PC-9 (cell line): ENCODE measurements at regions of chr6 and their contacts with region 1.

Region 1: DNA sequence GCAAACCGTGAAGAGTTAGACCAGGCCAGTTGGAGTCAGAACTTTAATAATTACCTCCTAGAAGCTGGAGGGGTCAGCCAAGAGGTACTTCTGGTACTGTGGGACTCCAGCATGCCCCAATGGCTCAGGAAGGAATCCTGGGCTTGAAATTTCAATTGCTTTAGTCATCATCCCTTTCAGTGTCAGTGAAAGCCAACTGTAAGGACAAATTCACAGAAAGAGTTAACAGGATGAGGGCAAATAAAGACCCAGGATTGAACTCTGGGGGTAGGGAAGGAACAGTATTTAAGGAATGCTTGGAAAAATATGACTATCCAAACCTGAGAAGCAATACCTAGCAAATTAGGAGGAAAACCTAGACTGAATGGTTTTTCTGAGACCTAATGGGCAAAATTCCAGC is 735.1 kb upstream of the MARCKS start:
- DNase-seq: peak; percentile 62 to 95
- H3K4me3 ChIP-seq: peak overlapping the region; percentile 6; the same call in 1 of the 2 replicates
- H3K27ac ChIP-seq: peak overlapping the region; percentile 93
- H3K4me1 ChIP-seq: peaks cover 57% of the 10 kb centered on the region
- H3K27me3 ChIP-seq: no peaks in the 10 kb centered on the region
- CTCF ChIP-seq: peak; percentile 63

Region 2: GRCh38 chr6:113182370-113183141 is 60.5 kb after region 1 on chr6:
- CTCF ChIA-PET with region 1: interaction called, 5 read pairs
- POLR2A ChIA-PET with region 1: no interaction called
- intact Hi-C with region 1: loop called (anchors 1 kb)
- DNase-seq: peak in 1 of 2 experiments; percentile 79
- H3K4me3 ChIP-seq: no peak overlapping the region
- H3K27ac ChIP-seq: peak overlapping the region; percentile 30
- H3K4me1 ChIP-seq: peaks cover 18% of the 10 kb centered on the region
- H3K27me3 ChIP-seq: no peaks in the 10 kb centered on the region
- CTCF ChIP-seq: no peak

Region 3: DNA sequence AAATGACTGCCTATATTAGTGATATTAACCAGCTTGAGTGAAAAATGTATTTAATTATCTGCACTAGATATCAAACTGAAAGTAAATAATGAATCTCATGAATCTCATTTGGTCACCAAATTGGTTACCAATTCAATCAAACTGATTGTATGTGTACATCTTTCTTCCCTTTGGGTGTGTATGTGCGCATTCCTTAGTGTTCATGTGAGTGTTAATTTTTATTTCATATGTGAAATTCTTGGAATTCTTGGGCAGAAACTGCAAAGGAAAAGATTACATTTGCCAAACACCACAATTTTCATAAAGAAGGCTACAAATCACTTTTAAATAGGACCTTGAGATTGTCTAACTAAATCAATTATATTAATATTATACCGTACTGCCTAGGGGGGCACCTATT is 86.7 kb after region 1 on chr6:
- CTCF ChIA-PET with region 1: no interaction called
- POLR2A ChIA-PET with region 1: no interaction called
- intact Hi-C with region 1: no loop called
- DNase-seq: no peak
- H3K4me3 ChIP-seq: no peak overlapping the region
- H3K27ac ChIP-seq: no peak overlapping the region
- H3K4me1 ChIP-seq: no peaks in the 10 kb centered on the region
- H3K27me3 ChIP-seq: no peaks in the 10 kb centered on the region
- CTCF ChIP-seq: no peak

Region 4: GRCh38 chr6:113361014-113361645 is 239.1 kb after region 1 on chr6:
- CTCF ChIA-PET with region 1: no interaction called
- POLR2A ChIA-PET with region 1: interaction called, 19 read pairs
- intact Hi-C with region 1: loop called (anchors 1 kb)
- DNase-seq: peak in 1 of 2 experiments; percentile 59
- H3K4me3 ChIP-seq: no peak overlapping the region
- H3K27ac ChIP-seq: 0 out of 2 replicates have a peak overlapping the region, but pooled peaks have one; percentile 2
- H3K4me1 ChIP-seq: peaks cover 37% of the 10 kb centered on the region
- H3K27me3 ChIP-seq: no peaks in the 10 kb centered on the region
- CTCF ChIP-seq: no peak

Region 5: GRCh38 chr6:113495506-113495905 is 373.4 kb after region 1 on chr6:
- CTCF ChIA-PET with region 1: no interaction called
- POLR2A ChIA-PET with region 1: no interaction called
- intact Hi-C with region 1: loop called (anchors 1 kb)
- DNase-seq: peak in 1 of 2 experiments; percentile 70
- H3K4me3 ChIP-seq: no peak overlapping the region
- H3K27ac ChIP-seq: peak overlapping the region; percentile 75
- H3K4me1 ChIP-seq: peaks cover 59% of the 10 kb centered on the region
- H3K27me3 ChIP-seq: no peaks in the 10 kb centered on the region
- CTCF ChIP-seq: no peak

Region 6: DNA sequence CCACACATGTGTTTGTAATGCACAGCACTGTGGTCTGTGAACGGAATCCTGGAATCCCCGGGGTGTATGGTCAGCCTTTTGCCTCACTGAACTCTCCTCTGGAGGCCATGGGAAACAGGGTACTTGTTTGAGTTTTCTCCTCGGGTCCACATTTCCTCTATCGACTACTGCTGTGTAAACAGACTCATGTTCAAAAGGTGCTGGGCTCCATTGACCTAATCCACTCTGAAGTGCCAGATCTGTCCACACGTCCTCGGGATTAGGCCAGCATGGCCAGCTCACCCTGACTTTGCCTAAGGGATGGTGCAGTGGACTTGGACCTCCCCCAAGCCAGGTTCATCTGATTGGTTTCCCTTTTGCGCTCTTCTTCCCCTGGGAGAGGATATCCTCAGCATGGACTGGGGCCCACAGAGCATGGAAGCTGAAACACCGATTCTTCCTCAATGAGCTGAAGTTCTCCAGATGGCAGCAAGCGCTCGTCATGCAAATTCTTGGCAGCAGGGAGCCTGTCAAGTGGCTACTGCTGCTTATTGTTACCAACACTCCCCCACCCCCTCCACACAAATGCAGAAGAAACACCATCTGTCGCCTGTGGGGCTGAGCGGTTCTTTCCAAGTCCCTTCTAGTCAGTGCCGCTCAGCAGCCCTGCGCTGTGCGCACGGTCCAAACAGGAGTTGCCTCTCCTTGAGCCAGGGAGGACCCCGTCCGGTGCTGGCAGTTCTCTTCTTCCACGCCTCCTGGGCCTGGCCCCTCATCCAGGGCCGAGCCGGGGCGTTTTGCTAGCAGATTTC is 442.5 kb after region 1 on chr6:
- CTCF ChIA-PET with region 1: no interaction called
- POLR2A ChIA-PET with region 1: no interaction called
- intact Hi-C with region 1: no loop called
- DNase-seq: peak in 1 of 2 experiments; percentile 28
- H3K4me3 ChIP-seq: no peak overlapping the region
- H3K27ac ChIP-seq: no peak overlapping the region
- H3K4me1 ChIP-seq: peaks cover 21% of the 10 kb centered on the region
- H3K27me3 ChIP-seq: no peaks in the 10 kb centered on the region
- CTCF ChIP-seq: no peak

Region 7: GRCh38 chr6:113690281-113691259 is 568.5 kb after region 1 on chr6:
- CTCF ChIA-PET with region 1: no interaction called
- POLR2A ChIA-PET with region 1: no interaction called
- intact Hi-C with region 1: loop called (anchors 5 kb)
- DNase-seq: peak; percentile 21 to 86
- H3K4me3 ChIP-seq: no peak overlapping the region
- H3K27ac ChIP-seq: no peak overlapping the region
- H3K4me1 ChIP-seq: peaks cover 39% of the 10 kb centered on the region
- H3K27me3 ChIP-seq: no peaks in the 10 kb centered on the region
- CTCF ChIP-seq: no peak

Region 8: GRCh38 chr6:113825781-113826180 is 703.7 kb after region 1 on chr6:
- CTCF ChIA-PET with region 1: no interaction called
- POLR2A ChIA-PET with region 1: no interaction called
- intact Hi-C with region 1: no loop called
- DNase-seq: no peak
- H3K4me3 ChIP-seq: no peak overlapping the region
- H3K27ac ChIP-seq: no peak overlapping the region
- H3K4me1 ChIP-seq: no peaks in the 10 kb centered on the region
- H3K27me3 ChIP-seq: no peaks in the 10 kb centered on the region
- CTCF ChIP-seq: no peak

Region 9: GRCh38 chr6:113909234-113909856 is 787.3 kb after region 1 on chr6:
- CTCF ChIA-PET with region 1: no interaction called
- POLR2A ChIA-PET with region 1: interaction called, 5 read pairs
- intact Hi-C with region 1: loop called (anchors 1 kb)
- DNase-seq: peak; percentile 5 to 57
- H3K4me3 ChIP-seq: no peak overlapping the region
- H3K27ac ChIP-seq: no peak overlapping the region
- H3K4me1 ChIP-seq: 0 out of 2 replicates have a peak, but pooled peaks cover 7% of the 10 kb centered on the region
- H3K27me3 ChIP-seq: no peaks in the 10 kb centered on the region
- CTCF ChIP-seq: peak; percentile 99